Activated CD4-positive, alpha-beta memory T cell treated with anti-CD3 and anti-CD28 coated beads for 36 hours (primary cell): ENCODE measurements at regions of chr4 and their contacts with region 1.

Region 1: GRCh38 chr4:128809477-128810330 is at the start of gene JADE1:
- DNase-seq: peak; percentile 95
- H3K4me3 Mint-ChIP-seq: peak within 1 kb of the TSS; percentile 89
- H3K27ac Mint-ChIP-seq: peak within 1 kb of the TSS; percentile 96
- H3K4me1 Mint-ChIP-seq: peaks cover 13% of the 10 kb centered on the region
- H3K27me3 Mint-ChIP-seq: no peaks in the 10 kb centered on the region
- total RNA-seq, gene JADE1: 25.4 to 28.3 TPM

Region 2: DNA sequence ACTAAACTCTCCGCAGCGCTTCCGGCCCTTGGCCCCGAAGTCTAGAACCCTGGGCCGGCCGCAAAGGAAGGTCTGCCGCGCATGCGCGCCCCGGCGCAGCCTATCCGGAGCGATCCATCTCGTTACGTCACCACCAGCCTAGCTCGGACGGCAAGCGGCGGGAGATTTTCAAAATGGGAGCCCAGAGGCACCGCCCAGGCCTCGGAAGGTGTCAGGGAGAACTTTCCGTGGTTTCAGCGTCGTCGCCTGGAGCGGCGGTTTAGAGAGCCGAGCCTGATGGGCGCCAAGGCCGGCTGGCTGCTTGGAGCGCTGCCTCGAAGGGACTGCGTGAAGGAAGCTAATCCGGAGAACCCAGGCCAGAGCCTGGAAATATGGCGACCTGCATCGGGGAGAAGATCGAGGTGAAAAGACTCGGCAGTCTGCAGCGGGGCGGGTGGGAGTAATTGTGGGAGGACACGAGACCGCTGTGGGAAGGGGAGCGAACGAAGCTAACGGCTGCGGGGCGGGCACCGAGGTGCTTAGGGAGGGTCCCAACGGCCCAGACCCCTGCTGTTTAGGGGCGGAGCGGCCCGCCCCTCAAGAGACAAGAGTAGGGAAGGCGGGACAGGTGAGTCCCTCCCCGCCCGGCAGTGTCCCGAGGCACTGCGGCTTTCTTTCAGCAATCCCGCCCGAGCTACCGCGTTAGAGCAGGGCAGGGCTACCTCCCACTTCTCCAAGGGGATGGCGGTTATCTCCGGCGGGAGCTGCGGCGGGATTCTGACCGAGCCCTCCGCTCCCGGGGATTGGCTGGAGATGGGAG is 928.7 kb before region 1 on chr4 and contains the start of gene PLK4:
- CTCF ChIA-PET with region 1: no interaction called
- POLR2A ChIA-PET with region 1: no interaction called
- intact Hi-C with region 1: loop called (anchors 5 kb)
- DNase-seq: peak; percentile 97
- H3K4me3 Mint-ChIP-seq: peak within 1 kb of the TSS; percentile 95
- H3K27ac Mint-ChIP-seq: peak within 1 kb of the TSS; percentile 98
- H3K4me1 Mint-ChIP-seq: peaks cover 14% of the 10 kb centered on the region
- H3K27me3 Mint-ChIP-seq: peaks cover 2% of the 10 kb centered on the region
- total RNA-seq, gene PLK4: 43.5 to 45.6 TPM

Region 3: DNA sequence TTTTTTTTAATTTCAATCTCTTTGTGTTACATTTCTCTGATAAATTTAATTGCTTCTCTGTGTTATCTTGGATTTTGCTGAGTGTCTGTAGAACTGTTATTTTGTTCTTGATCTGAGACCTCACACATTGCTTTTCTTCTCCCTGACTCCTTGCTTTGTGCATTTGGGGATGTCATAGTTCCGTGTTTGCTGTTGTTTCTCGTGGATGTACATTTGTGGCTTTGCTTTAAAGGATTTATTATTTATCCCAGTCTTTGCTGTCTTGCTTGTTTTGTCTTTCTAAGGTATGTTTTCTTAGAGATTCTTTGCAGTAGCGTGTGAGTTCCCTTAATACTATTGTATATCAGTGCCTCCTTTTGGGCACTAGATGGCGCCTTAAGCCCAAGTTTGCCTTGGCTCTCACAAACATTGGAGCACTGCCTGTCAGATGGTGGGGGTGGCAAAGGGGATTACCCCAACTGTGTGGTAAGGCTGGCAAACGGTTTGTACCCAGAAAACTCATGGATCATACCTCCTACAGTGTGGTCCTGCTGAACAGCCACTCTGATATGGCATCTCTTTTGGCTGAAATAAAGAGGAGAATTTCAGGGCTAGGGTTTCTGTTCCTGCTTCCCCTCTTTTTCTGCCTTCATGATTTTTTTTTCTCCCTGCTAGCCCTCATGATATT is 618.5 kb before region 1 on chr4:
- CTCF ChIA-PET with region 1: interaction called, 6 read pairs
- POLR2A ChIA-PET with region 1: no interaction called
- intact Hi-C with region 1: loop called (anchors 1 kb)
- DNase-seq: peak; percentile 80
- H3K4me3 Mint-ChIP-seq: no peak overlapping the region
- H3K27ac Mint-ChIP-seq: no peak overlapping the region
- H3K4me1 Mint-ChIP-seq: peaks cover 3% of the 10 kb centered on the region
- H3K27me3 Mint-ChIP-seq: no peaks in the 10 kb centered on the region

Region 4: DNA sequence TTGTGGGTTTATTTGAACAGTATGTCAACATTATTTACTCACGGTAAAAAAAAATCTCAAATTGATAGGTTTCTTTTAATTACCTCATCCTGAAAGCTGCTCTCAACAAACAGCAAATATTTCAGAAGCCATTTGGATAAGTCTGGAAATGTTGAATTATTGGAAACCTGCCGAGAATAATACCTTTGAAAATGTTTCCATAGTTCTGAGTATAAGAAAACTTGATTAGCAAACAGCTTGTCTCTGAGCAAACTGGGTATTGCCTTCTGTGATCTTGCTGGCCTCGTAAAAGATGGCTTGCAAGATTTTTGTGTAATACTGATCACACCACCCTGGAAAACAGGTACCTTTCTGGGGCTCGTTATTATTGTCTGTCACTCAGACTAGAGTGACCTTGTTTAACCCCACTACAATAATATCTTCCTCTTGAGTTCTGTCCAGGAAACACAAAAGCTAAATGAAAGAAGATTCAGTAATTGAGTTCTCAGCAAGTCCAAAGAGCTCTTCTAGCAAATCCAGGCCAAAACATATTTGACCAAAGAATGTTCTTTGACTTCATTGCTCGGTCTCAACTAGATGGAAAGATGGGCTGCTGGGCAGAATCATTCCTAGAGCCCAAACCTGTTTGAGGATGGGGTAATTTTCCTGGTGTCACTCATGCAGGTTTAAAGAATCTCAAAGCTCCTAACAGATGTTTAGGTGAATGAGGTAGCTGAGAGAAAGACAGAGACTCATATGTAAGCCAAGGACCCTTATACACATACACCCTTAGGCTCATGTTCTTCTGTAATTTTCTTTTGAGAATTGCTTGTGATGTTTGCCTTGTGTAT is 255.8 kb before region 1 on chr4:
- CTCF ChIA-PET with region 1: no interaction called
- POLR2A ChIA-PET with region 1: interaction called, 3 read pairs
- intact Hi-C with region 1: loop called (anchors 5 kb)
- DNase-seq: no peak
- H3K4me3 Mint-ChIP-seq: peak overlapping the region; percentile 84
- H3K27ac Mint-ChIP-seq: no peak overlapping the region
- H3K4me1 Mint-ChIP-seq: peaks cover 14% of the 10 kb centered on the region
- H3K27me3 Mint-ChIP-seq: peaks cover 12% of the 10 kb centered on the region

Region 5: GRCh38 chr4:128751334-128751733 is 58.4 kb before region 1 on chr4:
- CTCF ChIA-PET with region 1: no interaction called
- POLR2A ChIA-PET with region 1: no interaction called
- intact Hi-C with region 1: no loop called
- DNase-seq: no peak
- H3K4me3 Mint-ChIP-seq: no peak overlapping the region
- H3K27ac Mint-ChIP-seq: no peak overlapping the region
- H3K4me1 Mint-ChIP-seq: no peaks in the 10 kb centered on the region
- H3K27me3 Mint-ChIP-seq: peaks cover 3% of the 10 kb centered on the region

Region 6: DNA sequence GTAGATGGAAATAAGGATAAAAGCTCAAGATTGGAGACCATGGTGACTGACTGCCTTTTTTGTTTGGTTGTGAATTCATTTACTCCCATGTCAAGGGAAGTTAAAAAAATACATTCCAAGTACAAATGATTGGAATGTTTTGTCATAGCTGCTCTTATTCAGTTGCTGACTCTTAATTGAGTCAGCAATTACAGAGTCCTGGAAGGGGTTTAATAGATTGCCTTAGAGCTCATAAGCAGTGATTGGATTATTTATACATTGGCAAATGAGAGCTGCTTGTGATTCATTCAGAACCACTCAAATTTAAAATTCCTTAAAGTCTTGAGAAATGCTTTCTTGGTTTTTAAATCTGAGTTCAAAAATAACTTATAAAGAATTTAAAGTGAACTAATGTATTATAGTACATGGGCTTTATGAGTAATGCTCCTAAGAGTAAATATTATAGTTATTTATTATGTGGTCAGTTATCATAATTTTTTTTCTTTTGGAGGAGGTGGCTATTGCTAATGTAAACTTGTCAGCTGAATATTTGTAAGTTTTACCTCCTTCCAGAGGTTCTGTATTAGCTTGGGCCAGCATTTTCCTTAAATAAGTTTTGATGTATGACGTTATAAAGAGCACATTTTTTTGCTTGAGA is 13.4 kb after region 1 on chr4:
- CTCF ChIA-PET with region 1: interaction called, 8 read pairs
- POLR2A ChIA-PET with region 1: interaction called, 13 read pairs
- intact Hi-C with region 1: loop called (anchors 1 kb)
- DNase-seq: no peak
- H3K4me3 Mint-ChIP-seq: no peak overlapping the region
- H3K27ac Mint-ChIP-seq: no peak overlapping the region
- H3K4me1 Mint-ChIP-seq: peaks cover 78% of the 10 kb centered on the region
- H3K27me3 Mint-ChIP-seq: no peaks in the 10 kb centered on the region

Region 7: GRCh38 chr4:128863312-128864075 is 53.8 kb after region 1 on chr4:
- CTCF ChIA-PET with region 1: interaction called, 10 read pairs
- POLR2A ChIA-PET with region 1: interaction called, 10 read pairs
- intact Hi-C with region 1: loop called (anchors 1 kb)
- DNase-seq: peak; percentile 69
- H3K4me3 Mint-ChIP-seq: no peak overlapping the region
- H3K27ac Mint-ChIP-seq: peak overlapping the region; percentile 83
- H3K4me1 Mint-ChIP-seq: peaks cover 46% of the 10 kb centered on the region
- H3K27me3 Mint-ChIP-seq: no peaks in the 10 kb centered on the region